ENCODE measurements at regions of chr6 and their contacts with region 1.

Region 1: DNA sequence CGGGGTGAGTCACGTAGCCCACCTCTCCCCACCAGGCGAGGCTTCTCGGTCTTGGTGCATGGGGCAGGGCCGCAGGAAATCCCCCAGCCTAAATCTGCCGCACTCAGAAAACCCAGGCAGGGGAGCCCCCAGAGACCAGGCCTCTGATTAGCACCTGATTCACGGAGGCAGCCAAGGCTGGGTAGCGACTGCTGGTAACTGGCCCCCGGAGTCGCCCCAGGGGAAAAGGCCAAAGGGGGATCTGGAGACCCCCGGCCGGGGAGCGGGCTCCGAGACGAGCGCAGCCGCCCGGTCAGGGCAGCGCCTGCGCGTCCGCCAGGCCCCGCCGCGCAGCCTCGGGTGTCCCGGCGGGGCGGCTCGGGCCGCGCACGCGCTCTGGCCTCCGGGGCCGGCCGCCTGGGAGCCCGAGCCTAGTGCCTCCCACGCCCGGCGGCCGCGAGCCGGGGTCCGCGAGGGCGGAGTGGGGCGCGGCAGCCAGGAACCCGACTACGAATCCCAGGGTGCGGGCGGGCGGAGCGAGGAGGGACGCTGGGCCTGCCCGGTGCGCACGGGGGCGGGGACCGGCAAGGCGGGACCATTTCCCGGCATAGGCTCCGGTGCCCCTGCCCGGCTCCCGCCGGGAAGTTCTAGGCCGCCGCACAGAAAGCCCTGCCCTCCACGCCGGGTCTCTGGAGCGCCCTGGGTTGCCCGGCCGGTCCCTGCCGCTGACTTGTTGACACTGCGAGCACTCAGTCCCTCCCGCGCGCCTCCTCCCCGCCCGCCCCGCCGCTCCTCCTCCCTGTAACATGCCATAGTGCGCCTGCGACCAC is at the start of gene DUSP22:
- DNase-seq: peak; percentile 91
- ATAC-seq: peak; percentile 74
- H3K4me3 Mint-ChIP-seq: peak within 1 kb of the TSS; percentile 91
- H3K27ac Mint-ChIP-seq: peak within 1 kb of the TSS; percentile 91
- H3K4me1 Mint-ChIP-seq: peaks cover 47% of the 10 kb centered on the region
- H3K27me3 Mint-ChIP-seq: no peaks in the 10 kb centered on the region
- total RNA-seq, gene DUSP22: 49.1 to 50.4 TPM

Region 2: DNA sequence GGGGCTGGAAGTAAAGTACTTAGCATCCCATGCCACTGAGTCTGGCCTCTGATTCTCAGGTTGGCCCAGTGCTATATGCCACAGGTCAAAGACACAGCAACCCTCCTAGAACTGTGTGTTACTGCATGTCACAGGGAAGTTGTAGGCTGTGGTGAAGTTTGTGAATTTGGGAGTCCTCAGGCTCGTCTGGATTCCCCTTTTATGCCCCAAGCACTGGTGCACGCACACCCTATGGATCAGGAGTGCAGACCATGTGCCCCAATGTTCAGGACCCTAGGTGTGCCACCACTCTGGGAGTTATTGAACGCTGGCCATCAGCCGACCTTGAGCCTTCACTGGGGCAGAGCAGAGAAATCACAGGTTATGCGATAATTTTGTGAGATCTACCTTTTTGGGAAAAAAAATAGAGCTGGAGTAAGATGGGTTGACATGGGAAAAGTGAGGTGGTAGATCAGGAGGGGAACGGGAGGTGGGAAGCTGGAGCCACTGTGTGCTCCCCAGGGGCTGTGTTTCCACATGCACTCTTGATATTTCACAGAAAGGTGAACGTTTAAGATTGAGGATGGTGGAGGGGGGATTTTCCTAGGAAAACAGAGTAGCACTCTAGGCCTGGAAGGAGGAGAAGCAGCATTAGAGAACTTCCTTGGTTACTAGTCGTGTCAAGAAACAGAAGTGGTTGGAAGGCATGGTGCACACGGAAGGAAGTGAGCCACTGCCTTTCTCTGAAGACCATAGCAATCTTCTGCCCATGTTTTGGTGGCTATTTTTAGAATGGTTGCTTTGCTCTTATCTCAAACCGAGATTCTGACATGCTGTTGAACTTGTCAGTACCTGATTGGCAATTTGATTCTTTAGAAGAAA is 44.5 kb after region 1 on chr6:
- POLR2A ChIA-PET with region 1: interaction called, 12 read pairs
- DNase-seq: no peak
- ATAC-seq: peak; percentile 44
- H3K4me3 Mint-ChIP-seq: peak overlapping the region; percentile 91
- H3K27ac Mint-ChIP-seq: peak overlapping the region; percentile 87
- H3K4me1 Mint-ChIP-seq: peaks cover 51% of the 10 kb centered on the region
- H3K27me3 Mint-ChIP-seq: no peaks in the 10 kb centered on the region